ENCODE measurements at regions of chrX and their contacts with region 1.

Region 1: DNA sequence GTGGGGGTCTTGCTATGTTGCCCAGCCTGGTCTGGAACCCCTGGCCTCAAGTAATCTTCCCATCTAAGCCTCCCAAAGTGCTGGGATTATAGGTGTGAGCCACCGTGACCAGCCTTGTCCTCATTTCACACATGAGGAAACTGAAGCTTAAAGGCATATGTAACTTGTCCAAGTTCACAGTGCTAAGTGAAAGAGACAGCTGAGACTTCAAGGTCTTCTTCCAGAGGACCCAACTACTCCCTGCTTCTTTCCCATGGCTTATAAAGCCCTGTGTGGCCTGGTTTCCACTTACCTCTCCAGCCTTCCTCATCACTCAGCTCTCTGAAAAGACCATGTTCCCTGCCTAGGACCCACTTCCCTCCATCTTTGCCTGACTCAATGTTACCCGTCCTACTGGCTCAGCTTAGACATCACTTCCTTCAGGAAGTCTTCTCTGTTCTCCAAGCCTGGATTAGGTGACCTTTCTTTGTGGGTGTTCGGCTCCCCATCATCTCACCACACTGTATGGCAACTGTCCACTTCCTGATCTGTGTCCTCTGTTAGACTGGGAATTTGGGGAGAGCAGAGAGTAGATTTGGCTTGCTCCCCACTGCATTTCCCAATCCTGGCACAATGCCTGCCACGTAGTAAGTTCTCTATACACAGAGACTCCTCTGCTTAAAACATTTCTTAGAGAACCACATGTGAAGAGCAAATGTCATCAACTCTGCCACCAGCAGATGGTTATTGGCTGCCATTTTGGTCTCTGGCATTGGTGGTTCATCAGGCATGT is 30.4 kb upstream of the LAMP2 start:
- DNase-seq: no peak
- ATAC-seq: no peak
- H3K4me3 ChIP-seq: no peak overlapping the region
- H3K27ac ChIP-seq: no peak overlapping the region
- H3K4me1 ChIP-seq: no peaks in the 10 kb centered on the region
- H3K27me3 ChIP-seq: no peaks in the 10 kb centered on the region
- CTCF ChIP-seq: no peak
- POLR2A ChIP-seq: no peak

Region 2: DNA sequence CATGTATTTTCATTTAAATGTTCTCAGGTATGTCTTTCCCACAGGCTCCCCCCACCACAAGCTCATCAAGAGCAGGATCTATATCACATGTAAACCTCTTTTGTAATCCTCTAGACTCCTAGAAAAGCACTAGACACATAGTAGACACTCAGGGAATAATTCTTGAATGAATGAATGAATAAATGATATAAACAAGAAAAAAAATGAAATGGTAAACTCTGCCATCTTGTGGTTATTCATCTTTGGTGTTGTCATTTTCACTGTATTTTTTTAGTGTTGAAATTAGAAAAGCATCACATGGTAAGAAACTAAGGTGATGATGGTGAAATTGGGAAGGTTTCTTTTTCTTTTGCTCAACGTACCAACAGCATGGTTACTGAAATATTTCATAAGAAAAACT is 164.6 kb after region 1 on chrX:
- in situ Hi-C with region 1: no loop called
- intact Hi-C with region 1: loop called (anchors 5 kb)
- DNase-seq: no peak
- ATAC-seq: no peak
- H3K4me3 ChIP-seq: no peak overlapping the region
- H3K27ac ChIP-seq: no peak overlapping the region
- H3K4me1 ChIP-seq: no peaks in the 10 kb centered on the region
- H3K27me3 ChIP-seq: no peaks in the 10 kb centered on the region
- CTCF ChIP-seq: peak in 1 of 5 experiments; percentile 38
- POLR2A ChIP-seq: no peak

Region 3: GRCh38 chrX:120769576-120770341 is 270.3 kb after region 1 on chrX:
- in situ Hi-C with region 1: loop called in 2 of 4 experiments (anchors 10 to 25 kb)
- intact Hi-C with region 1: no loop called
- DNase-seq: no peak
- ATAC-seq: no peak
- H3K4me3 ChIP-seq: no peak overlapping the region
- H3K27ac ChIP-seq: no peak overlapping the region
- H3K4me1 ChIP-seq: no peaks in the 10 kb centered on the region
- H3K27me3 ChIP-seq: no peaks in the 10 kb centered on the region
- CTCF ChIP-seq: peak in 1 of 5 experiments; percentile 19
- POLR2A ChIP-seq: no peak

Measured in gastrocnemius medialis (tissue), 4 donors.